HCT116 (cell line): ENCODE measurements at regions of chr19 and their contacts with region 1.

Region 1: DNA sequence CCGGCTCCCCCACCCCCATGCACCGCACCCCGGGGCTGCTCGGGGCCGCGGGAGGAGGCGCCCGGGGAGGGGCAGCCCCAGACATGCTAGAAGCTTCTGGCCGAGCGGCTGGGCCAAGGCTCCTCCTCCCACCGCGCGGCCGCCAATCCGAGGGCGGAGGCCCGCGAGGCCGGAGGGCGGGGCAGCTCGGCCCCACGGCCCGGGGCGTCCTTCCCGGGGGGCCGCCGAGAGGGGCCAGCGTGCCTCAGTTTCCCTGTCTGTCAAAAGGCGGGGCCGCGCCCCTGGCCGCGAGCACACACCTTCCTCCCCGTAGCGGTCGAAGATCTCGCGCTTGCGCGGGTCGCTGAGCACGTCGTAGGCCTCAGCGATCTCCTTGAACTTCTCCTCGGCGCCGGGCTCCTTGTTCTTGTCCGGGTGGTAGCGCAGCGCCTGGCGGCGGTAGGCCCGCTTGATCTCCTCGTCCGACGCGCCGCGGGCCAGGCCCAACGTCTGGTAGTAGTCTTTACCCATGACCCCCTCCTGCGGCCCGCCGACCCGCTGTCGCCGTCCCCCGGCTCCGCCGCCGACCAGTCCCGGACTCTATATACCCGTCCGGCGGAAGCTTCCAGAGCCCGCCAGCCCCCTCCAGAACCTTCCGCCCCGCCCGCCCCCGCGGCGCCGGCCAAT is at the start of gene DNAJB1:
- DNase-seq: no peak
- ATAC-seq: peak; percentile 72
- H3K4me3 ChIP-seq: peak within 1 kb of the TSS; percentile 90 to 96
- H3K27ac ChIP-seq: peak within 1 kb of the TSS; percentile 97
- H3K4me1 ChIP-seq: peaks cover 48 to 83% of the 10 kb centered on the region in 2 experiments
- H3K27me3 ChIP-seq: no peaks in the 10 kb centered on the region
- CTCF ChIP-seq: no peak
- POLR2A ChIP-seq: peak; percentile 89
- RAD21 ChIP-seq: peak; percentile 18; the same call in 1 of the 2 replicates
- total RNA-seq, gene DNAJB1: 175 TPM

Region 2: DNA sequence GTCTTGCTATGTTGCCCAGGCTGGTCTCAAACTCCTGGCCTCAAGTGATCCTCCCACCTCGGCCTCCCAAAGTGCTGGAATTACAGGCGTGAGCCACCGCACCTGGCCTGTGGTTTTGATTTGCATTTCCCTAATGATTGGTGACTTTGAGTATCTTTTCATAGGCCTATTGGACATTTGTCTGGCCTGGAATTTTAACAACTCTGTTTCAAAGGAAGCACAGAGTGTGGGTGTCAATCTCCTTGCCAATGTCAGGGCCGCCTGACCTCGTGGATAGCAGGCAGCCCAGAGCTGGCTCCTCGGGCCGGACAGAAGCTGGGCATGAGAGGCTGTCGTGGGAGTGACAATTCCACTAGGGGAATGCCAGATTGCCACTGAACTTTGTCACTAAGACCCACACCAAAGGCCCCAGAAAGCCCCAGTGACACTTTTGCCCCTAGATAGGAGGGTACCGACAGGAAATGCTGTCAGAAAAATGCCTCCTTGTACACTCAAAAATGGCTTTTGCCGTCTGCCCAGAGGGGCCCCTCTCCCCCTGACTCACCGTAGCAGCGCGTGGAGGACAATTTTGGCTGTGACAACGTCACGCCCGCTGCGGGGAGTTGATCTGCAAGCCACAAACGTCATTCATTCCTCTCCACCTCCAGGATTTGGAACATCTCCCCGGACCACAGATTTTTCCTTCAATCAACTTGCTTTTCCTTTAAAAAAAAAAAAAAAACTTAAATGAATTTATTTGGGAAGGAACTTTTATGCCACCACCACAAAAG is 148.4 kb before region 1 on chr19:
- CTCF ChIA-PET with region 1: no interaction called
- POLR2A ChIA-PET with region 1: no interaction called
- RAD21 ChIA-PET with region 1: no interaction called
- intact Hi-C with region 1: no loop called
- DNase-seq: no peak
- ATAC-seq: no peak
- H3K4me3 ChIP-seq: no peak overlapping the region
- H3K27ac ChIP-seq: no peak overlapping the region
- H3K4me1 ChIP-seq: peaks cover 17 to 26% of the 10 kb centered on the region in 2 experiments
- H3K27me3 ChIP-seq: no peaks in the 10 kb centered on the region
- CTCF ChIP-seq: no peak
- POLR2A ChIP-seq: no peak
- RAD21 ChIP-seq: no peak

Region 3: GRCh38 chr19:14496028-14496833 is 21.7 kb before region 1 on chr19 and contains the start of gene GIPC1:
- CTCF ChIA-PET with region 1: no interaction called
- POLR2A ChIA-PET with region 1: interaction called, 11 read pairs
- RAD21 ChIA-PET with region 1: no interaction called
- intact Hi-C with region 1: no loop called
- DNase-seq: peak; percentile 97
- ATAC-seq: peak; percentile 93
- H3K4me3 ChIP-seq: peak within 1 kb of the TSS; percentile 78 to 86
- H3K27ac ChIP-seq: peak within 1 kb of the TSS; percentile 58
- H3K4me1 ChIP-seq: peaks cover 20 to 29% of the 10 kb centered on the region in 2 experiments
- H3K27me3 ChIP-seq: no peaks in the 10 kb centered on the region
- CTCF ChIP-seq: no peak
- POLR2A ChIP-seq: no peak
- RAD21 ChIP-seq: no peak
- total RNA-seq, gene GIPC1: 103 TPM

Region 4: GRCh38 chr19:14505488-14506432 is 12.2 kb before region 1 on chr19:
- CTCF ChIA-PET with region 1: interaction called, 4 read pairs
- POLR2A ChIA-PET with region 1: interaction called, 112 read pairs
- RAD21 ChIA-PET with region 1: no interaction called
- intact Hi-C with region 1: no loop called
- DNase-seq: peak; percentile 82
- ATAC-seq: peak; percentile 79
- H3K4me3 ChIP-seq: peak overlapping the region; percentile 16 to 51
- H3K27ac ChIP-seq: peak overlapping the region; percentile 100
- H3K4me1 ChIP-seq: peaks cover 68 to 75% of the 10 kb centered on the region in 2 experiments
- H3K27me3 ChIP-seq: no peaks in the 10 kb centered on the region
- CTCF ChIP-seq: peak; percentile 62 to 93 (median 91); a peak in 5 of 6 replicates
- POLR2A ChIP-seq: no peak
- RAD21 ChIP-seq: peak; percentile 49

Region 5: GRCh38 chr19:14536926-14537692 is 19.1 kb after region 1 on chr19:
- CTCF ChIA-PET with region 1: no interaction called
- POLR2A ChIA-PET with region 1: interaction called, 14 read pairs
- RAD21 ChIA-PET with region 1: no interaction called
- intact Hi-C with region 1: no loop called
- DNase-seq: peak; percentile 88
- ATAC-seq: peak; percentile 96
- H3K4me3 ChIP-seq: no peak overlapping the region
- H3K27ac ChIP-seq: peak overlapping the region; percentile 45
- H3K4me1 ChIP-seq: peaks cover 13 to 36% of the 10 kb centered on the region in 2 experiments
- H3K27me3 ChIP-seq: no peaks in the 10 kb centered on the region
- CTCF ChIP-seq: no peak
- POLR2A ChIP-seq: no peak
- RAD21 ChIP-seq: no peak

Region 6: GRCh38 chr19:14550201-14550784 is 32.3 kb after region 1 on chr19:
- CTCF ChIA-PET with region 1: interaction called, 3 read pairs
- POLR2A ChIA-PET with region 1: interaction called, 22 read pairs
- RAD21 ChIA-PET with region 1: no interaction called
- intact Hi-C with region 1: no loop called
- DNase-seq: no peak
- ATAC-seq: peak; percentile 59
- H3K4me3 ChIP-seq: peak overlapping the region in 1 of 2 experiments; percentile 30; a peak in 1 of 4 replicates
- H3K27ac ChIP-seq: peak overlapping the region; percentile 78
- H3K4me1 ChIP-seq: peaks cover 43 to 59% of the 10 kb centered on the region in 2 experiments
- H3K27me3 ChIP-seq: no peaks in the 10 kb centered on the region
- CTCF ChIP-seq: no peak
- POLR2A ChIP-seq: no peak
- RAD21 ChIP-seq: 0 out of 2 replicates have a peak, but pooled peaks have one; percentile 14

Region 7: DNA sequence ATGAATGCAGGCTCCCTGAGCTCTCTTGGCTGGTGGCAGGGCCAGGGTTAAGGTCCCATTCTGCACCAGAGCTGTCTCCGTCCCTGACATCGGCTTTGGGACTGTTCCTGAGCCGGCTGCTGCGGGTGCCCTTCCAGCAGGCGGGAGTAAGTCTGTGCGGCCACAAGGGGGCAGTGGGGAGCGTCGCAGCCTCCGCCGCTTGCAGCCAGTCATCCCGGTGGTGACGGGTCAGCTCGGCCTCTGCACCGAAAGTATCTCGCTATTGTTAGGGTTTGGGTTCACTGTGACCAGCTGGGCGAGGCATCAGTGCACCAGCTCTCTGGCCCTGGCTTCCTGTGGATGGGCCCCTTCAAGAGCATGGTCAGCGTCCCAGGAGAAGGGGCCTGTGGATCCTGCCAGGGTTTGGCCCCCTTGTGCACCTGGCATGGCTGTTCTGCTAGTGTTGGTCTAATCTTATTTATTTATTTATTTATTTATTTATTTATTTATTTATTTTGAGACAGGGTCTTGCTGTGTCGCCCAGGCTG is 38.8 kb after region 1 on chr19:
- CTCF ChIA-PET with region 1: no interaction called
- POLR2A ChIA-PET with region 1: interaction called, 22 read pairs
- RAD21 ChIA-PET with region 1: no interaction called
- intact Hi-C with region 1: no loop called
- DNase-seq: peak; percentile 67
- ATAC-seq: peak; percentile 83
- H3K4me3 ChIP-seq: peak overlapping the region; percentile 13 to 23; a peak in 3 of 4 replicates
- H3K27ac ChIP-seq: peak overlapping the region; percentile 51
- H3K4me1 ChIP-seq: peaks cover 33 to 47% of the 10 kb centered on the region in 2 experiments
- H3K27me3 ChIP-seq: no peaks in the 10 kb centered on the region
- CTCF ChIP-seq: peak; percentile 57 to 97 (median 96); a peak in 5 of 6 replicates
- POLR2A ChIP-seq: no peak
- RAD21 ChIP-seq: no peak; the same call in 1 of the 2 replicates

Region 8: GRCh38 chr19:14599548-14600147 is 81.7 kb after region 1 on chr19:
- CTCF ChIA-PET with region 1: no interaction called
- POLR2A ChIA-PET with region 1: no interaction called
- RAD21 ChIA-PET with region 1: no interaction called
- intact Hi-C with region 1: no loop called
- DNase-seq: no peak
- ATAC-seq: no peak
- H3K4me3 ChIP-seq: no peak overlapping the region
- H3K27ac ChIP-seq: no peak overlapping the region
- H3K4me1 ChIP-seq: no peaks in the 10 kb centered on the region
- H3K27me3 ChIP-seq: no peaks in the 10 kb centered on the region
- CTCF ChIP-seq: no peak
- POLR2A ChIP-seq: no peak
- RAD21 ChIP-seq: no peak